Left ventricle myocardium superior (tissue), 1 donor: ENCODE measurements at regions of chr9 and their contacts with region 1.

Region 1: DNA sequence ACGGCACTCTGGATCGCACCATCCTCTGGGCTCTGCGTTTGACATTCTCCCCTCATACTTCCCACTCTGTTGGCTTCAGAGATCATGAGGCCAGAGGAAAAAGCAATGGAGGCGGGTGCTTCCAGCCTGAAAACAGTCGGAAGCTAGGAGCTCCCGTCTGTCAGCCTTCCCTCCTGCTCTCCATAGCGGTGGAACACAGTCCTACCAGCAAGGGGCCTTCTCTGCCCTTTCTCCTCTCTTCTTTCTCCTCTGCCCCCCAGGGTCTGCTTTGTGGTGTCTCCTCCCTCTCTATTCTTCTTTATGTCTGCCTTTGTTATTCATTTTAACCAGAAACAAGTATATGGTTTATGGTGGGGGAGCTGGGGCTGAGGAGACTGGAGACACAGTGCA is 152.5 kb upstream of the NFIB start:
- DNase-seq: no peak
- ATAC-seq: no peak

Region 2: DNA sequence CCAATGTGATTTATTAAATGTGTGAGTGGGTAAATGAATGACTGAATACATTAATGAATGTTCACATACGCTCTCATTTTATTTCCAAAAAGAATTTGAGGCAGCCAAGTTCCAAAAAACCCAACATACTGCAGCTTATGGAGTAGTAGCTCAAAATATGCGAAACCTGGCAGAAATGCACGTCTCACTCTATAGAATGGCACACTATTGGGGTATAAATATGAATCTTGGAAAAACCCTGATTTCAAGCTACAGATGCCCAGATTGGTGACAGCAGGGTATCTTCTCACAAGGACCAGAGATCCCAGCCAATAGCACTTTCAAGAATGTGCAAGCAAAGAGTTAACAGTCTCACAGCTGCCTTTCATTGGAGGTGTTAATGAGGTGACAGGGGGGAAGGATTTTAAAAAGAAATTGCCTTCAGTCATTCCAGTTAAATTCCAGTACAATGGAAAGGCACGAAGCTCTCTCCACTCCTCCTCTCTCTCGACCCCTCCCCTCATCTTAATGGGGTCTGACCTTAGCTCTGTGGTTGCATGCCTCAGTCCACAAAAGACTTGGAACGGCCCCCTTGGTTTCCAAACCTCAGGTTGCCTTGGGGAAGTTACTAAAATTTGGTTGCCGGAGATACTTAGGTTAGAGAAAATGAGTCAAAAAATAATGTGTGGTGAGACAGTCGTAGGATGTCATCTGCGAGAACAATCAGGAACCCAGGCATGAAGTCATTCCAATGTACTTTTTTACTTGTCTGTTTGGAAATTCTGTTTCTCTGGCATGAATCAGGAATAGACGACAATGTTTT is 459.8 kb before region 1 on chr9:
- intact Hi-C with region 1: no loop called
- DNase-seq: no peak
- ATAC-seq: no peak

Region 3: GRCh38 chr9:14652729-14653377 is 186.4 kb after region 1 on chr9:
- intact Hi-C with region 1: loop called (anchors 10 kb)
- DNase-seq: no peak
- ATAC-seq: no peak